ENCODE measurements at regions of chr2 and their contacts with region 1.

Region 1: GRCh38 chr2:168118733-168119514 is 128.5 kb downstream of the STK39 start:
- DNase-seq: peak in 6 of 9 donors; percentile 10 to 41 (median 36)
- ATAC-seq: peak; percentile 55
- H3K4me3 ChIP-seq: no peak overlapping the region
- H3K4me3 Mint-ChIP-seq: no peak overlapping the region
- H3K27ac ChIP-seq: no peak overlapping the region
- H3K27ac Mint-ChIP-seq: no peak overlapping the region
- H3K4me1 ChIP-seq: peaks cover 0 to 4% of the 10 kb centered on the region in 2 donors
- H3K4me1 Mint-ChIP-seq: peaks cover 0 to 2% (median 0%) of the 10 kb centered on the region in 7 donors
- H3K27me3 ChIP-seq: no peaks in the 10 kb centered on the region
- H3K27me3 Mint-ChIP-seq: no peaks in the 10 kb centered on the region

Region 2: DNA sequence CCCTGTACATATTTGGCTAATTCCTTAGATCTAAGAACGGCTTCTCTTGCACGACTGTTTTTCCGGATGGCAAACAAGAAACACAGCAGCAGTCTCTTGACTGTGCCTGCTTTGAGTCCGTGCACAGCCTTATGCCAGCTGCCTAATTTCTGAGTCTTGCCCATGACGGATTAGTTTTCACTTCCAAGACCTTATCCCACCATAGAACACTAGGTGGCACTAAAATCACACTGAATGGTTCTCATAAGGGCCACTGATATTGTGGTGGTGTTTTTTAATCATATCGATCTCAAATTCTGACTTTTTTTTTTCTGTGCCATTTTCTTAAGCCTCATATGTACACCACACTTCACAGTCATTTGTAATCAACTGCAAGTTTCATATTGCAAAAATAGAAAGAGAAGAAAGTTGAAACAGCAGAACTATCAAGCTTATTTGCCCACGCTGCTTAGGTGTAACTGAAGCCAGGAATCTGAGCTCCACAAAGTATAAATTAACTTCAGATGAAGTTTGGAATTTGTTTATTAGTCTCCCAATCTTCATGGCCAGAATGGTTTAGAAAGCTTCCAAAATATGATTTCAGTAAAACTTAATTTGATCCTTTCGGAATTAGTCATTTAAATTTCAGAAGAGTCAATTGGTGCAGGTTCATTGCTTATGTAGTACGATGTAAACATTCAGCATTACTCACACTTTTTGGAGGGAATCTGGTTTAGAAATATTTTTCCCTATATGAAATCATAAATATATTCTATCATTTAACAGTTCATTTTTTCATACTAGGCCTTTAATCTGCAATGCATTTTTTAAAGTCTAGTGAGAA is 1579.4 kb before region 1 on chr2:
- CTCF ChIA-PET with region 1: interaction called, 15 read pairs
- POLR2A ChIA-PET with region 1: no interaction called
- intact Hi-C with region 1: loop called (anchors 1 kb)
- DNase-seq: peak in 7 of 9 donors; percentile 19 to 54 (median 43)
- ATAC-seq: peak; percentile 66
- H3K4me3 ChIP-seq: no peak overlapping the region
- H3K4me3 Mint-ChIP-seq: no peak overlapping the region
- H3K27ac ChIP-seq: no peak overlapping the region
- H3K27ac Mint-ChIP-seq: no peak overlapping the region
- H3K4me1 ChIP-seq: no peaks in the 10 kb centered on the region
- H3K4me1 Mint-ChIP-seq: peaks cover 0 to 1% (median 0%) of the 10 kb centered on the region in 7 donors
- H3K27me3 ChIP-seq: no peaks in the 10 kb centered on the region
- H3K27me3 Mint-ChIP-seq: peaks cover 0 to 18% (median 5%) of the 10 kb centered on the region in 5 donors

Region 3: GRCh38 chr2:167127135-167127534 is 991.8 kb before region 1 on chr2:
- CTCF ChIA-PET with region 1: no interaction called
- POLR2A ChIA-PET with region 1: no interaction called
- intact Hi-C with region 1: loop called in 1 of 2 experiments (anchors 2 kb)
- DNase-seq: no peak
- ATAC-seq: no peak
- H3K4me3 ChIP-seq: no peak overlapping the region
- H3K4me3 Mint-ChIP-seq: no peak overlapping the region
- H3K27ac ChIP-seq: no peak overlapping the region
- H3K27ac Mint-ChIP-seq: no peak overlapping the region
- H3K4me1 ChIP-seq: no peaks in the 10 kb centered on the region
- H3K4me1 Mint-ChIP-seq: peaks cover 0 to 2% (median 0%) of the 10 kb centered on the region in 7 donors
- H3K27me3 ChIP-seq: no peaks in the 10 kb centered on the region
- H3K27me3 Mint-ChIP-seq: no peaks in the 10 kb centered on the region

Region 4: GRCh38 chr2:167764772-167765341 is 354.1 kb before region 1 on chr2:
- CTCF ChIA-PET with region 1: no interaction called
- POLR2A ChIA-PET with region 1: no interaction called
- intact Hi-C with region 1: loop called in 1 of 2 experiments (anchors 10 kb)
- DNase-seq: no peak
- ATAC-seq: no peak
- H3K4me3 ChIP-seq: no peak overlapping the region
- H3K4me3 Mint-ChIP-seq: no peak overlapping the region
- H3K27ac ChIP-seq: no peak overlapping the region
- H3K27ac Mint-ChIP-seq: no peak overlapping the region
- H3K4me1 ChIP-seq: no peaks in the 10 kb centered on the region
- H3K4me1 Mint-ChIP-seq: no peaks in the 10 kb centered on the region
- H3K27me3 ChIP-seq: no peaks in the 10 kb centered on the region
- H3K27me3 Mint-ChIP-seq: peaks cover 0 to 8% (median 0%) of the 10 kb centered on the region in 5 donors

Region 5: DNA sequence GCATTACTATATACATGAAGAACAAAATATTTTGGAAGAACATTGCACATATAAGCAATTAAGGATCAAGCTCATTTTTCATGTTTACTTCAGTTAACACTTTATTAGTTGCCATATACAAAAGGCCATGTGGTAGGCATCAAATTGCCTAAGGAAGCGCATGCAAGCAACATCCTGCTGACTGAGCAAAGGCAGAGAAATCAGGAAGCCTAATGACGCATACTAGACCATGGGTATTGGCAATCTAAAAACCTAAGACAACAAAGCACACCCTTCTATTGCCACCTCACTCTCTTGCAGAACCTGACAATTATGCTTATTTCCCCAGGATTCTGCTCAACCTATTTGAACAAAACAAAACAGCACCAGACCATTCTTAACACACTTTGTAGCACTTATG is 43.5 kb before region 1 on chr2:
- CTCF ChIA-PET with region 1: no interaction called
- POLR2A ChIA-PET with region 1: interaction called, 5 read pairs
- intact Hi-C with region 1: loop called in 1 of 2 experiments (anchors 2 kb)
- DNase-seq: no peak
- ATAC-seq: no peak
- H3K4me3 ChIP-seq: no peak overlapping the region
- H3K4me3 Mint-ChIP-seq: no peak overlapping the region
- H3K27ac ChIP-seq: no peak overlapping the region
- H3K27ac Mint-ChIP-seq: peak overlapping the region in 1 of 9 donors; percentile 5
- H3K4me1 ChIP-seq: no peaks in the 10 kb centered on the region
- H3K4me1 Mint-ChIP-seq: peaks cover 0 to 22% (median 4%) of the 10 kb centered on the region in 7 donors
- H3K27me3 ChIP-seq: no peaks in the 10 kb centered on the region
- H3K27me3 Mint-ChIP-seq: no peaks in the 10 kb centered on the region